ENCODE measurements at regions of chr3 and their contacts with region 1.

Region 1: DNA sequence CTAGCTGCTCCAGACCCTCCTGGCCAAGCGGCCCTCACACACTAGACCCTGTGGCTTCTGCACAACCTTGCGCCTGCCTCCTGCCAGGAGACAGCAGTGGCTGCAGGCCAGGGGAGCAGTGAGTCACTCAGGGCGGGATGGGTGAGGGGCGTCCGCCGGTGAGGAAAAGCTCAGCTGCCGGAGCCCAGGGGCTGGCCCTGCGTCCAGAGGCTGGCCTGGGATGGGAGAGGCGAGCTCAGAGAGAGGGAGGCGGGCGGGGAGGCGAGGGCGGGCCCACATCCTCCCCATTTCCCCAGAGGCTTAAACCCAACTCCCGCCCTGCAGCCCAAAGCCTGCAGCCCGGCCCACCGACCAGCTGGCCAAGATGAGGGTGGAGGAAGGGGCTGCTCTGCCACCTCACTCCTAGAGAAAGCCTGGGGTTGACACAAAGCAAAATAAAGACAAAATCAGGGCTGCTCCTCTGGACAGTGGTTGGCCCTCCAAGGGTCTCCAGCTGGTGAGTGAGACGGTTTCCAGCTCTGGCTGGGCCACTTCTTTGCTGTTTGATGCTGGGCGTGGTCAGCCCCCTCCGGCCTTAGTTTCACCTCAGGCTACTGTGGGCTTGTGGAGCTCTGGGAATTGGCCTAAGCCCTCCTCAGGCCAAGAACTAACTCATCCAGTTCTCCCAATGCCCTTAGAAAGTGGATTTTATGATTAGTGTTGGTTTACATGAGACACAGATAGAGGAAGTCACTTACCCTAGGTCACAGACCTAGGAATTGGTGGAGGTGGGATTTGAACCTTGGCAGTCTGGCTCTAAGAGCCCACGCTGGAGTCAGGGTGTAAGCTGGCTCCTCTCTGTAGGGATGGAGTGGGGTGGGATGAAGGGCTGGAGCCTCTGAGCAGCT is 50.6 kb downstream of the IQSEC1 start:
- DNase-seq: peak; percentile 75
- CTCF ChIP-seq: no peak

Region 2: GRCh38 chr3:13040361-13041074 is 17.9 kb after region 1 on chr3:
- CTCF ChIA-PET with region 1: interaction called, 18 read pairs
- POLR2A ChIA-PET with region 1: no interaction called
- DNase-seq: peak; percentile 90
- CTCF ChIP-seq: no peak

Region 3: GRCh38 chr3:13166243-13167063 is 143.9 kb after region 1 on chr3:
- CTCF ChIA-PET with region 1: no interaction called
- POLR2A ChIA-PET with region 1: no interaction called
- DNase-seq: no peak
- CTCF ChIP-seq: no peak

Region 4: DNA sequence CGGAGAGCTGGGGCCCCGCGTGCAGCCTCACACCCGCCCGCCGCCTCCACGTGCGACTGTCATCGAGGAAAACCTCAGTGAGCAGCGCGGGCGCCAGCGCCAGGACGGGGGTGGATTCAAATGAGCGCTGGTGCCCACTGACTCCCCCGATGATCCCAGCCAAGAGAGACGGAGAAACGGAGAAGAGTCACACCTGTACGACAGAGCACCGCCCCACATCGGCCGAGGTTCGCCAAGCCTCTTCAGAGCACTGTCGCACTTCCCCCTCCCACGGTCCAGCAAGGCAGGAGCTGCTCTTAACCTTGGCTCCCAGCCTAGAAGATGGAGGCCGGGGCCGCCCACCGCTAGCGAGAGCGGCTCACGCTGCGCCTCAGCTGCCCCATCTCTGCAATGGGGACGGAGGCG is 181.6 kb after region 1 on chr3:
- CTCF ChIA-PET with region 1: no interaction called
- POLR2A ChIA-PET with region 1: no interaction called
- DNase-seq: no peak
- CTCF ChIP-seq: no peak

Region 5: DNA sequence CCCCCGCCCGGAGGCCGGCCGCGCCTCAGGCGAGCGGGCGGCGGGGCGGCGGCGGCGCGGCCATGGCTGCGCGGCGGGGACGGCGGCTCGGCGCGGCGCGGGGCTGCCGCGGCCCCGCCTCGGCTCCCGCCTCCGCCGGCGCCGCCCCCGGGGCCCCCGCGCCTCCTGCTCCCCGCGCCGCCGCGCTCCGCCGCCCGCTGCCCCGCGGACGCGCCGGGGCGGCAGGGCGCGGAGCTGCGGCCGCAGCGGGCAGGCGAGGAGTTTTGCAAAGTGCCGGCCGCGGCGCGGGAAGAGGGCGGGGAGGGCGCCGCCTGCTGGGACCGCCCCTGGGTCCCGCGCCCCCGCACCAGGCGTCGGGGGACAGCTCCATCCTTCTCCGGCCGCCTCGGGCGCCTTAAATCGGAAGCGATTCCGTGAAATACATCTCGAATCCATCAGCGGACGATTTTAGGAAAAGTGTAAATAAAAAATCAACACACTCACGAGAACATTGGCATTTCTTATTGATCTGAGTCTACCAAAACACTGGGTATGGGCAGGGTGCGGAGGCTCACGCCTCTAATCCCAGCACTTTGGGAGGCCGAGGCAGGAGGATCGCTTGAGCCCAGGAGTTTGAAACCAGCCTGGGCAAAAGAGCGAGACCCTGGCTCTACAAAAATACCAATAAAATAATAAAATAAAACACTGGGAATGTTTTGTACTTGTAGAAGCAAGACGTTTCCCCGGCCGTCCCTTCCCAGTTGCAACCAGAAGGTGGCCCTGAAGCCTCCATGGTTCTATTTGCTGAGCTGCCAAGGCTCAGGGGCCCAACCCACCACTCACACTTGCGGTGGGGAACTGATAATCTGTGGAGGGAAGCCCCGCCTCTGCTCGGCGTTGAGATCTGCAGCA is 260.6 kb after region 1 on chr3:
- CTCF ChIA-PET with region 1: no interaction called
- POLR2A ChIA-PET with region 1: no interaction called
- DNase-seq: no peak
- CTCF ChIP-seq: peak; percentile 22